ENCODE measurements at regions of chr13 and their contacts with region 1.

Region 1: DNA sequence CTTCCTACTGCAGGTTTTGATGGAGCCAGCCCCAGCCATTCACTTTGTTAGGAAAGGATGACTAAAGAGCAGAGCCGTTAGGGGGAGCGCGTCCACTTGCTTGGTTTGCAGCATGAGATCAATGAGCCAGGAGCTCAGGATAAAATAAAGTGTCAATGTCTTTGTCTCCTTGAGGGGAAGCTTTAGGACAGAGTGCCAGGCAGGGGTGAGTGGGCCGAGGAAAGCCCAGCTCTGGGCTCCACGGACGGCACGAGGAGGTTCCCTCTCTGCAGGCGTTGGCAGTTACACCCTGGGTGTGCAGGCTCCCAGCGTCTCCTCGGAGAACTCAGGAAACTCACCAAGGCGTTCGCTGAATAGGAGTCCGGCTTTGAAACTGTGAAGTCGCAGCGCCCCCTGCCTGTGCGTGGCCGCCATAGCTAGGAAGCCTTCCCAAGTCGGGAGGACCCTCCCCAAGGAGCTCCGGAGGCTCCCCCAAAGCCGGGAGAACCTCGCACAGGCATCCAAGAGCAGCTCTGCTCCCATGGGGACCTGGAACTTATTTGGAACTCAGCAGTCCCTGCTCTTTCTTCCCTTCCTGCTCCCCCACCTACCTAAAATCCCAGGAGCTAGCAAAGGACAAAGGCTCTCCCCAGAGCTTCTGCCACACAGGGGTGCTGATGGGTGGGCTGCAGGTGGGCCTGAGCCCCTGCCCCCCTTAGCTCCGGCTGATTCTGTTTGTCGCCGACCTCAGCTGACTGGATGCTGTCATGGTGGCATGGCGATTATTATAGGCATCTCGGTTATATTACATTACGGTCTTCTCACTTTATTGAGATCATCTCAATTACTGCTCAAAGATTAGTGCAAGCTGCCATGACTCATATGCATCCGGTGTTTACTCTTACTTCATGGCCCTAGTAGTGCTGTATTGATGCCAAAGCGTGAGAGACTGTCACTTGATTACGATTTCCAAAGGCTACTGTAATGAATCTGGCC is 34.4 kb downstream of the GSX1 start:
- DNase-seq: peak; percentile 41 to 62
- ATAC-seq: peak; percentile 85 to 87
- H3K4me3 ChIP-seq: peak overlapping the region in 2 of 4 donors; percentile 22 to 46
- H3K27ac ChIP-seq: no peak overlapping the region
- H3K4me1 ChIP-seq: no peaks in the 10 kb centered on the region
- H3K27me3 ChIP-seq: peaks cover 32 to 41% (median 41%) of the 10 kb centered on the region in 3 donors
- CTCF ChIP-seq: peak; percentile 83 to 92 (median 89)
- POLR2A ChIP-seq: no peak

Region 2: DNA sequence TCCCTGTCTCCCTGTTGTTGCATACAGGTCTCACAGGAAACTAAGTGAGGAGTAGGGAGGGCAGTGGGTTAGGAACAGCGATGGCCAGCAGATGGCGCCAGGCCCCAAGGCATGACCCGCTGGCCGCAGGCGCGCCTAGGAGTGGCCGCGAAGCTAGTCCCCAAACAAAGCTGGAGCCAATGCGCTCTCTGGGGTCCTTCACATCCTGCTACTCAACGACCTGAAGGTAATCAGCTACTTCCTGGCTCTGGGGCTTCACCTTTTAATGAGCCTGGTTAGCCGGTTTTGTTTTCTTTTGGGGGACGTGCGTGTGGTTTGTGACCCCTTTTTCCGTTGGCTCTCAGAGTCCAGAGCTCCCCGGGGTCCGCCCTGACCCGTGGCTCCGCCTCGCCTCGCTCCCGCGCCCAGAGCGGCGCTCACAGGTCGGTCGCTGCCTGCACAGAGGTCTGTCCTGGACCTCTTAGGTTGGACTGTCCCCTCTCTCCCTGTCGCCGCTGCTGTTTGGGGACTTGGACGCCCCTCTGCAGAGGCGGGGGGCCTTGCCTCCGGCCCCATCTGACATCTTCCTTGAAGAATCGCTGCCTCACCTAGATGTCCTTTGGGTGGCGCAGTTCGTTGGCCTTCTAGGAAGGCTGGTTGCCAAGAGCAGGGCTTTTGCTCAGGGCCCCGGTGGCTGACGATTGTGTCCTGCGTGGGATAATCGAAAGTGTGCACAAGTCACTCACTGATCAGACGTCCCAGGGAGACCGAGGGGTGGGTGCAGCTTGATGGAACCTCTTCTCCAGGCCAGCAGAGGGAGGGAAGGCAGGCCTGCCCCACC is 464.4 kb before region 1 on chr13:
- in situ Hi-C with region 1: loop called in 1 of 4 experiments (anchors 5 kb)
- intact Hi-C with region 1: loop called (anchors 1 kb)
- DNase-seq: peak; percentile 46 to 65
- ATAC-seq: peak; percentile 90 to 96
- H3K4me3 ChIP-seq: peak overlapping the region; percentile 48 to 63 (median 52)
- H3K27ac ChIP-seq: no peak overlapping the region
- H3K4me1 ChIP-seq: peaks cover 3 to 8% of the 10 kb centered on the region in 2 donors
- H3K27me3 ChIP-seq: peaks cover 0 to 3% (median 0%) of the 10 kb centered on the region in 3 donors
- CTCF ChIP-seq: peak; percentile 80 to 93 (median 90)
- POLR2A ChIP-seq: no peak

Region 3: GRCh38 chr13:27374650-27375049 is 452.0 kb before region 1 on chr13:
- in situ Hi-C with region 1: loop called (anchors 5 to 10 kb)
- intact Hi-C with region 1: loop called (anchors 1 kb)
- DNase-seq: peak; percentile 23 to 33
- ATAC-seq: peak; percentile 88 to 94
- H3K4me3 ChIP-seq: no peak overlapping the region
- H3K27ac ChIP-seq: no peak overlapping the region
- H3K4me1 ChIP-seq: no peaks in the 10 kb centered on the region
- H3K27me3 ChIP-seq: peaks cover 0 to 8% (median 6%) of the 10 kb centered on the region in 3 donors
- CTCF ChIP-seq: peak; percentile 35 to 76 (median 54)
- POLR2A ChIP-seq: no peak

Region 4: GRCh38 chr13:27533155-27533643 is 293.5 kb before region 1 on chr13:
- in situ Hi-C with region 1: loop called in 2 of 4 experiments (anchors 10 kb)
- intact Hi-C with region 1: loop called (anchors 1 kb)
- DNase-seq: peak; percentile 53 to 59
- ATAC-seq: peak; percentile 78 to 96
- H3K4me3 ChIP-seq: peak overlapping the region in 1 of 4 donors; percentile 32
- H3K27ac ChIP-seq: no peak overlapping the region
- H3K4me1 ChIP-seq: peaks cover 3 to 6% of the 10 kb centered on the region in 2 donors
- H3K27me3 ChIP-seq: no peaks in the 10 kb centered on the region
- CTCF ChIP-seq: peak; percentile 71 to 92 (median 86)
- POLR2A ChIP-seq: no peak

Region 5: DNA sequence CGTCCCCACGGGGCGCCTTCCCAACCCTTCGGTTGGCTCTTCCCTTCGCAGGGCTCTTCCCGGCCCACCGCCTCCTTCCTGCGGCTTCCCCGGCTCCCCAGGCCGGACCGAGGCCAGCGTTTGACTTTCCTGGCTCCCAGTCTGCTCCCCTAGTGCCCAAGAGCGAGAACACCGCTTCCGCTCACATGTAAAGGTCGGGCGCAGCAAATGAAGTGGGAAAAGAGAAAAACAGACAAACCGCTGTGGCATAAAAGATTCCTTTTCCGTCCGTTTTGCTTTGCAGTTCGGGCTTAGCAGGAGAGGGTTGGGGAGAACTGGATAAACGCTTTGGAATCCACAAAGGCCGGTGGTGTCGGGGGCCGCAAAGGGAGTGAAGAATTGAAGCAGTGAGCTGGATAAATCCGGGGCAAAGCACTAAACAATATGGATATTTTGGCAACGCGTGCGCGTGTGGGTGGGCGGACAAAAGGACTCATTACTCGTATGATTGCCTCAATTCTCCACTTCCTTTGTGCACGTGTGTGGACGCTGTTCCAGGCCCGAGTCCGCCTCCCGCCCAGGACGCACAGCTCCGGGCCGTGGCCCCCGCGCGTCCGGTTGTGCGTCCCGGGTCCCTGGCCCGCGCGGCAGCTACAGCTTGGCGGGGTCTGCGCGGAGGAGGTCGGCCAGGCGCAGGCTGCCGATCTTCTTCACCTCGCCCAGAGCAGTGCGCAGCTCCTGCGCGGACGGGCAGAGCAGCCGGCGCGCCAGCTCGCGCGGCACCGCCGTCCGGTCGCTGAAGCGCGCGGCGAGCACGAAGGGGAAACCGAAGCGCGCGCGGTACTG is 151.0 kb after region 1 on chr13:
- in situ Hi-C with region 1: loop called (anchors 5 to 25 kb)
- intact Hi-C with region 1: no loop called
- DNase-seq: no peak
- ATAC-seq: no peak
- H3K4me3 ChIP-seq: no peak overlapping the region
- H3K27ac ChIP-seq: no peak overlapping the region
- H3K4me1 ChIP-seq: peaks cover 7 to 10% of the 10 kb centered on the region in 2 donors
- H3K27me3 ChIP-seq: peaks cover 86 to 93% (median 92%) of the 10 kb centered on the region in 3 donors
- CTCF ChIP-seq: no peak
- POLR2A ChIP-seq: no peak

Region 6: DNA sequence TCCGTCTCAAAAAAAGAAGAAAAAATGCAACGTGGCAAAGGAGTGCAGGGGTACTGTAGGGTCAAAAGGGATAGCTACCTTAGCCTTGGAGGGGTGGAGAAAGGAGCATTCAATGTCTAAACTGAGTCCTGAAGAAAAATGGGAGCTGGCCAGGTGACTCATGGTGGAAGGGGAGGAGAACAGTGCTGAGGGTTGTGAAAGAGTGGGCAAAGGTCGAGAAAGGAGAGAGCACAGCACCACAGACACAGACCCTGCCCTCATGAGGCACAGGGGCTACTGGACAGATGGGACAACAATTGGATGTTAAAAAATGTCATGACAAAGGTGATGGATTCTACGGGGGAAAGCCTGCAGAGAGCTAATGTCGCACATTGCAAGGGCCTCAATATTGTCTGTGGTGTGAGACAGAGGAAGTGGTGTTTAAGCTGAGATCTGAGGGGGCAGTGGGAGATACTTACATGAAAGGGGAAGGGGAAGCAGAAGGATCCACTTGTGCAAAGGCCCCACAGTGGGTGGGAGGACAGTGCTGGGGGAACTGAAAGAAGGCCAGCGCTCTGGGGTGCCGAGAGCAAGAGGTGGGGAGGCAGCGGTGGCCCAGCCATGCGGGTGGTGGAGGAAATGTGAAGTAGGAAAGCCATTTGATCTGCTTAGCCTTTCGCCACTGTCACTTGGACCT is 204.7 kb after region 1 on chr13:
- in situ Hi-C with region 1: no loop called
- intact Hi-C with region 1: no loop called
- DNase-seq: peak; percentile 12 to 24
- ATAC-seq: no peak
- H3K4me3 ChIP-seq: no peak overlapping the region
- H3K27ac ChIP-seq: no peak overlapping the region
- H3K4me1 ChIP-seq: no peaks in the 10 kb centered on the region
- H3K27me3 ChIP-seq: no peaks in the 10 kb centered on the region
- CTCF ChIP-seq: no peak
- POLR2A ChIP-seq: no peak

Region 7: GRCh38 chr13:28942906-28943305 is 1116.2 kb after region 1 on chr13:
- in situ Hi-C with region 1: no loop called
- intact Hi-C with region 1: no loop called
- DNase-seq: no peak
- ATAC-seq: no peak
- H3K4me3 ChIP-seq: no peak overlapping the region
- H3K27ac ChIP-seq: no peak overlapping the region
- H3K4me1 ChIP-seq: no peaks in the 10 kb centered on the region
- H3K27me3 ChIP-seq: no peaks in the 10 kb centered on the region
- CTCF ChIP-seq: no peak
- POLR2A ChIP-seq: no peak